ENCODE measurements at regions of chr3 and their contacts with region 1.

Region 1: GRCh38 chr3:124281453-124282316 is 289.8 kb upstream of the ROPN1 start:
- H3K4me3 ChIP-seq: no peak overlapping the region
- H3K27ac ChIP-seq: no peak overlapping the region
- H3K4me1 ChIP-seq: no peaks in the 10 kb centered on the region
- CTCF ChIP-seq: peak; percentile 42; the same call in 1 of the 2 replicates

Region 2: GRCh38 chr3:124014366-124014942 is 267.2 kb before region 1 on chr3:
- CTCF ChIA-PET with region 1: interaction called, 21 read pairs
- POLR2A ChIA-PET with region 1: no interaction called
- H3K4me3 ChIP-seq: no peak overlapping the region
- H3K27ac ChIP-seq: no peak overlapping the region
- H3K4me1 ChIP-seq: no peaks in the 10 kb centered on the region; the same call in 1 of the 2 replicates
- CTCF ChIP-seq: no peak

Region 3: GRCh38 chr3:124234852-124235252 is 46.8 kb before region 1 on chr3:
- CTCF ChIA-PET with region 1: no interaction called
- POLR2A ChIA-PET with region 1: no interaction called
- H3K4me3 ChIP-seq: no peak overlapping the region
- H3K27ac ChIP-seq: no peak overlapping the region
- H3K4me1 ChIP-seq: no peaks in the 10 kb centered on the region
- CTCF ChIP-seq: no peak

Measured in HEK293 (cell line).